PC-3 (cell line): ENCODE measurements at regions of chr14 and their contacts with region 1.

Region 1: DNA sequence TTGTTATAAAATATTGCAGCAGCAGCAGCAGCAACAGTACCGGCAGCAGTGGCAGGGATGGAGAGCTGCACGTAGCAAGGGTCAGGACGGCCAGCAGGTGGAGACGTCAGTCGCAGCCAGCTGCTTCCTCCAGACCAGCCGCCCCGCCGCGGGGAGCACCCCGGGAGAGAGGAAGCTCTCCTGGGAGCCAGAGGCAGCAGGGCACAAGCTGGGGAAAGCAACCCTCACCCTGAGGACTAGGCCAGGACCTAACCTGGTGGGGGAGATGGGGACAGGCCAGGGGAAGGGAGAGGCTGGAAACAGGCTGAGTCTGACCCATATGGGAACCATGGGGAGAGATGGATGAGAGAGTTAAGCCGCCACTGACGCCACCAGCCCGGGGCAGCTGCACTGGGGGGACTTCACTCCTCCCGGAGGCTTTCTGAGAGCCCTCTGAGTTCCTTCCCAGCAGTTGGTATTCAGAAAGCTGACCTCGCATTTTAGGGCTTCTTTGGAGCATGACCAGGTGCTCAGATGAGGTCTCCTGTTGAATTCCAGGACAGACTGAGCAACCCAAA is 56.3 kb downstream of the SPTB start:
- DNase-seq: peak; percentile 83
- ATAC-seq: peak; percentile 99
- H3K4me3 ChIP-seq: peak overlapping the region; percentile 47
- H3K27ac ChIP-seq: no peak overlapping the region
- H3K4me1 ChIP-seq: no peaks in the 10 kb centered on the region; the same call in 1 of the 2 replicates
- H3K27me3 ChIP-seq: no peaks in the 10 kb centered on the region
- CTCF ChIP-seq: peak; percentile 90

Region 2: GRCh38 chr14:64806202-64806860 is 17.1 kb before region 1 on chr14:
- CTCF ChIA-PET with region 1: interaction called, 4 read pairs
- POLR2A ChIA-PET with region 1: no interaction called
- intact Hi-C with region 1: loop called (anchors 1 kb)
- DNase-seq: peak; percentile 99
- ATAC-seq: peak; percentile 86
- H3K4me3 ChIP-seq: peak overlapping the region; percentile 52
- H3K27ac ChIP-seq: peak overlapping the region; percentile 93
- H3K4me1 ChIP-seq: peaks cover 36% of the 10 kb centered on the region
- H3K27me3 ChIP-seq: no peaks in the 10 kb centered on the region
- CTCF ChIP-seq: no peak

Region 3: GRCh38 chr14:64919622-64920021 is 96.2 kb after region 1 on chr14:
- CTCF ChIA-PET with region 1: no interaction called
- POLR2A ChIA-PET with region 1: no interaction called
- intact Hi-C with region 1: no loop called
- DNase-seq: no peak
- ATAC-seq: no peak
- H3K4me3 ChIP-seq: no peak overlapping the region
- H3K27ac ChIP-seq: no peak overlapping the region
- H3K4me1 ChIP-seq: peaks cover 12% of the 10 kb centered on the region
- H3K27me3 ChIP-seq: no peaks in the 10 kb centered on the region
- CTCF ChIP-seq: no peak

Region 4: GRCh38 chr14:65074449-65075150 is 251.2 kb after region 1 on chr14:
- CTCF ChIA-PET with region 1: no interaction called
- POLR2A ChIA-PET with region 1: no interaction called
- intact Hi-C with region 1: no loop called
- DNase-seq: no peak
- ATAC-seq: no peak
- H3K4me3 ChIP-seq: no peak overlapping the region
- H3K27ac ChIP-seq: no peak overlapping the region
- H3K4me1 ChIP-seq: peaks cover 12% of the 10 kb centered on the region
- H3K27me3 ChIP-seq: no peaks in the 10 kb centered on the region
- CTCF ChIP-seq: no peak